ENCODE measurements at regions of chr19 and their contacts with region 1.

Region 1: DNA sequence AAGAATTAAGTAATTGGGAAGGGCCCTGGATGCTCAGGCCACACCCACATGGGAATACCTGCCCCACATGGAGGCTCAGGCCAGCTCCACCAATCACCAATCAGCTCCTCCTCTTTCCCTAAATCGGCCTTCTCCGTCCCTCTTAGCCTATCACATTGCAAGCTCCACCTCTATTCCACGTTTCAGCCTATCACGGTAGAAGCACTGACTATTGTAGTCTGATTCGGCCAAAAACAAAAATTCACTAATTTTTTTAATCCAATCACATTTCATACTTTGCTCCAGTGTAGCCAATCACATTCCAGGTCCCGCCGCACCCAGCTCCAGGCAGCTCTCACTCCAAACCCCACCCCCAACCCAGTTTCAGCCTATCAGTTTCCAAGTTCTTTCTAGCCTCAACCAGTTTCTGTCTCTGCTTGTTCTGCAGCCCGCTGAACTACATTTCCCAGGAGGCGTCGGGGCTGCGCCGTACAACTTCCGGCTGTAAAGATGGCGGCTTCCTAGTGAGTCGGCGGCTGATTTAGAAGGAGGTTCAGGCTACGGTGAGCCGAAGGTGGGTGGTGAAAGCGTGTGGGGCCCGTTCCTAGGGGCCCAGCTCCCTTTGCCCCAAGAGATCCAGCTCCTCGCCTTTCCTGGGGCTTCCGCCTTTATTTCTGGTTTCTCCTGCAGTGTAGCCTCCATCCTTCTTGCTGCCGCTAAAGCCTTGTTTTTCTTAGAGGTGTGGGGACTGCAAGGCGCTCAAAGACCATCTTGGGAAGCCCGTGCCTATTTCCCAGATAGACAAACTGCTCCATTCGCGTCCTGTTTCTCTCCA is at the start of gene BABAM1:
- DNase-seq: peak; percentile 99
- H3K4me3 Mint-ChIP-seq: peak within 1 kb of the TSS; percentile 87
- H3K27ac Mint-ChIP-seq: peak within 1 kb of the TSS; percentile 85
- H3K4me1 Mint-ChIP-seq: peaks cover 20% of the 10 kb centered on the region
- H3K27me3 Mint-ChIP-seq: no peaks in the 10 kb centered on the region
- total RNA-seq, gene BABAM1: 108 to 109 TPM

Region 2: GRCh38 chr19:16829010-16829821 is 438.0 kb before region 1 on chr19 and contains the start of gene SIN3B:
- CTCF ChIA-PET with region 1: no interaction called
- intact Hi-C with region 1: loop called (anchors 5 kb)
- DNase-seq: peak; percentile 91
- H3K4me3 Mint-ChIP-seq: peak within 1 kb of the TSS; percentile 82
- H3K27ac Mint-ChIP-seq: peak within 1 kb of the TSS; percentile 81
- H3K4me1 Mint-ChIP-seq: peaks cover 34% of the 10 kb centered on the region
- H3K27me3 Mint-ChIP-seq: peaks cover 9% of the 10 kb centered on the region
- total RNA-seq, gene SIN3B: 18.8 to 20.6 TPM

Region 3: DNA sequence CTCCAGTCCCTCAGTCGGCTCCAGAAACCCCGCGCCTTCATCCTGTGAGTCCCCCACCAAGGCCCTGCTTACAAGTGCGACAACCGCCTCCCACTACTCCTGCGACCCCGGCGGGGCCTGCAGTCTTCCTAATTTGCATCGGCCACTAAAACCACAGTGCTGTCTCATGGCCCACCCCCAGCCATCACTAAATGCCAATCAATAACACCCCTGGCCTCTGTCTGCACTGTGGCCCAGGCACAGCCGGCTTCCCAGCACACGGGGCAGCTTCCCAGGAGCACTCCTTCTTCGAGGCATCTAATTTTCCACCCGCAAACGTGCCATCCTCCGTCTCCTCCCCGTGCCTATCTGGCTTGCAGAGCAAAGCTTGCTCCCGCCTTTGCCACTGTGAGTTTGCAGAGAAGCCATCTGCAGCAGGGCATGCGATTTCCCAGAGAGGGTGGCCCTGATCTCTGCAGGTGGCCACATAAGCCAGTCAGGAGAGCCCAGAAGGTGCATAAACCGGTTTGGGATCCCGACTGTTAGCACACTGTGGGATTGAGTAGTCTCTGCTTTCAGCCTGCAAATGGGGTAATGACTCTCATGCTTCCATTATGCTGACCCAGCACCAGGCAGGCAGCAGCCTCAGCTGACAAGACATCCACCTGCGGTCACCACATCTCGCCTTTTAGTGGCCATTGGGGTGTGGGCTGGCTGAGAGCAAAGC is 86.0 kb before region 1 on chr19:
- CTCF ChIA-PET with region 1: no interaction called
- intact Hi-C with region 1: no loop called
- DNase-seq: no peak
- H3K4me3 Mint-ChIP-seq: no peak overlapping the region
- H3K27ac Mint-ChIP-seq: peak overlapping the region; percentile 53
- H3K4me1 Mint-ChIP-seq: peaks cover 19% of the 10 kb centered on the region
- H3K27me3 Mint-ChIP-seq: no peaks in the 10 kb centered on the region

Region 4: DNA sequence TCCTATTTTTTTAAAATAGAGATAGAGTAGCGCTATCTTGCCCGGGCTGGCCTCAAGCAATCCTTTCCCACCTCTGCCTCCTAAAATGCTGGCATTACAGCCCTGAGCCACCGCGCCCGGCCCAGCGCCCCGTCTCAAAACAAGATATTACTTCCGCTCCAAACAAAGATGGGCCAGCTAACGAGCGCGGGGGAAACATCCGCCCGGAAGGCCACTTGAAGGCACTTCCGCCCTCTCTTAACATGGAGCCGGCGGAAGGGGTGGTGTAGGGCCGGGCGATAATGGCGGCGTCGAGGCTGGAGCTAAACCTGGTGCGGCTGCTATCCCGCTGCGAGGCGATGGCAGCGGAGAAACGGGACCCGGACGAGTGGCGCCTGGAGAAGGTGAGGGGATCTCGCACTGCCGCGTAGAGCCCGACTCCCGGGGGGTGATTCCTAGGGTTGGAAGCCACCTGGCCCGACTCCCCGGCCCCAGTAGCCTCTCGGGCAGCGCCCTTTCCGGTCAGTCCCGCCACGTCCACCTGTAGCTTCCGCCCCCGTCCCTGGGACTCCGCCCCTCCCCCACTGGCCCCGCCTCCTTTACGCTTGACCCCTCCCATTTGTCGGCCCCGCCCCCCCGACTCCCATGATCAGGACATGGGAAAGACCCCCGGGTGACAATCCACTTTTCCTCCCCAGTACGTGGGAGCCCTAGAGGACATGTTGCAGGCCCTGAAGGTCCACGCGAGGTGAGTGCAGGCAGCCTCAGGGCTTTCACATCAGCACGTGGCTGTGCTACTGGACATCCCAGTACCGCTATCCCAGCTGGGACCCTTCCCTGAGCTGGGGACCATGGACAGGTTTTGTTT is 51.8 kb before region 1 on chr19 and contains the start of gene USE1:
- CTCF ChIA-PET with region 1: no interaction called
- intact Hi-C with region 1: loop called (anchors 1 kb)
- DNase-seq: peak; percentile 93
- H3K4me3 Mint-ChIP-seq: peak within 1 kb of the TSS; percentile 85
- H3K27ac Mint-ChIP-seq: peak within 1 kb of the TSS; percentile 97
- H3K4me1 Mint-ChIP-seq: peaks cover 10% of the 10 kb centered on the region
- H3K27me3 Mint-ChIP-seq: no peaks in the 10 kb centered on the region
- total RNA-seq, gene USE1: 24.7 to 25.3 TPM

Region 5: GRCh38 chr19:17226002-17226933 is 40.9 kb before region 1 on chr19 and contains the start of gene OCEL1:
- CTCF ChIA-PET with region 1: interaction called, 4 read pairs
- intact Hi-C with region 1: loop called (anchors 1 kb)
- DNase-seq: peak; percentile 98
- H3K4me3 Mint-ChIP-seq: peak within 1 kb of the TSS; percentile 83
- H3K27ac Mint-ChIP-seq: peak within 1 kb of the TSS; percentile 90
- H3K4me1 Mint-ChIP-seq: peaks cover 5% of the 10 kb centered on the region
- H3K27me3 Mint-ChIP-seq: no peaks in the 10 kb centered on the region
- total RNA-seq, gene OCEL1: 8.7 to 9.3 TPM

Region 6: GRCh38 chr19:17246681-17247425 is 20.3 kb before region 1 on chr19:
- CTCF ChIA-PET with region 1: interaction called, 4 read pairs
- intact Hi-C with region 1: loop called (anchors 1 kb)
- DNase-seq: no peak
- H3K4me3 Mint-ChIP-seq: peak overlapping the region; percentile 85
- H3K27ac Mint-ChIP-seq: no peak overlapping the region
- H3K4me1 Mint-ChIP-seq: peaks cover 4% of the 10 kb centered on the region
- H3K27me3 Mint-ChIP-seq: no peaks in the 10 kb centered on the region

Region 7: GRCh38 chr19:17336872-17337722 is 69.9 kb after region 1 on chr19 and contains the start of gene GTPBP3:
- CTCF ChIA-PET with region 1: no interaction called
- intact Hi-C with region 1: loop called (anchors 1 kb)
- DNase-seq: peak; percentile 98
- H3K4me3 Mint-ChIP-seq: peak within 1 kb of the TSS; percentile 88
- H3K27ac Mint-ChIP-seq: peak within 1 kb of the TSS; percentile 93
- H3K4me1 Mint-ChIP-seq: peaks cover 28% of the 10 kb centered on the region
- H3K27me3 Mint-ChIP-seq: no peaks in the 10 kb centered on the region
- total RNA-seq, gene GTPBP3: 36.8 to 45.7 TPM

Region 8: GRCh38 chr19:17419621-17420466 is 152.7 kb after region 1 on chr19 and contains the start of gene MVB12A:
- CTCF ChIA-PET with region 1: no interaction called
- intact Hi-C with region 1: loop called (anchors 1 kb)
- DNase-seq: peak; percentile 98
- H3K4me3 Mint-ChIP-seq: peak within 1 kb of the TSS; percentile 87
- H3K27ac Mint-ChIP-seq: peak within 1 kb of the TSS; percentile 87
- H3K4me1 Mint-ChIP-seq: peaks cover 16% of the 10 kb centered on the region
- H3K27me3 Mint-ChIP-seq: no peaks in the 10 kb centered on the region
- total RNA-seq, gene MVB12A: 29.3 to 32.1 TPM